Panc1 (cell line): ENCODE measurements at regions of chr3 and their contacts with region 1.

Region 1: GRCh38 chr3:40452876-40453730 is 4.0 kb upstream of the RPL14 start:
- DNase-seq: peak; percentile 87
- ATAC-seq: peak; percentile 98
- H3K4me3 ChIP-seq: peak overlapping the region; percentile 78 to 81
- H3K27ac ChIP-seq: peak overlapping the region; percentile 88
- H3K4me1 ChIP-seq: peaks cover 12% of the 10 kb centered on the region
- H3K27me3 ChIP-seq: no peaks in the 10 kb centered on the region
- CTCF ChIP-seq: no peak

Region 2: DNA sequence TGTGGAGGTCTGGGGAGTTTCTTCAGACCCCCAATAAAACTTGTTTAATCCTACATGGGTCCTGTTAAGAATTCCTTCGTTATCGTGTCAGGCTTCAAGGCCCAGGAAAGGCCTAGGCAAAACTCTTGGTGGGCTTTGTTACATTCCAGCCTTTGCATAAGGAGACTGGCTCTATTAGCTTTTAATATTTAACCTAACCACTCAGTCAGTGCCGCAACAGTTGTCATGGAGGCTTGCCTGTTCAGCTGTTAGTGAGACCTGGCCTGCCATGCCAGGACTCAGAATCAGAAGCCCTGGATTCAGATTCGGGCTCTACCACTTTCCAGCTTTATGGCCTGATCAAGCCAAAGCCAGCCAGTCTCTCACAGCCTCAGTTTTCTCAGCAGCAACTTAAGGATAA is 124.0 kb before region 1 on chr3:
- CTCF ChIA-PET with region 1: no interaction called
- POLR2A ChIA-PET with region 1: no interaction called
- in situ Hi-C with region 1: no loop called
- intact Hi-C with region 1: loop called (anchors 5 kb)
- DNase-seq: no peak
- ATAC-seq: no peak
- H3K4me3 ChIP-seq: no peak overlapping the region
- H3K27ac ChIP-seq: no peak overlapping the region
- H3K4me1 ChIP-seq: no peaks in the 10 kb centered on the region
- H3K27me3 ChIP-seq: no peaks in the 10 kb centered on the region
- CTCF ChIP-seq: no peak